ENCODE measurements at regions of chr1 and their contacts with region 1.

Region 1: GRCh38 chr1:11037740-11038182 is 9.3 kb downstream of the MASP2 start:
- DNase-seq: peak; percentile 90
- ATAC-seq: peak; percentile 98
- H3K4me3 ChIP-seq: no peak overlapping the region
- H3K4me3 Mint-ChIP-seq: no peak overlapping the region
- H3K27ac ChIP-seq: no peak overlapping the region
- H3K27ac Mint-ChIP-seq: no peak overlapping the region
- H3K4me1 ChIP-seq: peaks cover 0 to 3% of the 10 kb centered on the region in 2 donors
- H3K4me1 Mint-ChIP-seq: peaks cover 4% of the 10 kb centered on the region
- H3K27me3 ChIP-seq: peaks cover 0 to 13% (median 2%) of the 10 kb centered on the region in 4 experiments
- H3K27me3 Mint-ChIP-seq: peaks cover 7% of the 10 kb centered on the region
- CTCF ChIP-seq: peak; percentile 99

Region 2: GRCh38 chr1:11012250-11013171 is 25.2 kb before region 1 on chr1 and contains the start of gene TARDBP:
- CTCF ChIA-PET with region 1: interaction called, 12 read pairs
- POLR2A ChIA-PET with region 1: no interaction called
- intact Hi-C with region 1: no loop called
- DNase-seq: peak; percentile 98
- ATAC-seq: peak; percentile 88
- H3K4me3 ChIP-seq: peak within 1 kb of the TSS; percentile 81 to 97 (median 95)
- H3K4me3 Mint-ChIP-seq: peak within 1 kb of the TSS; percentile 86
- H3K27ac ChIP-seq: peak within 1 kb of the TSS; percentile 98 to 99
- H3K27ac Mint-ChIP-seq: peak within 1 kb of the TSS; percentile 99
- H3K4me1 ChIP-seq: peaks cover 15 to 26% of the 10 kb centered on the region in 2 donors
- H3K4me1 Mint-ChIP-seq: peaks cover 29% of the 10 kb centered on the region
- H3K27me3 ChIP-seq: no peaks in the 10 kb centered on the region
- H3K27me3 Mint-ChIP-seq: no peaks in the 10 kb centered on the region
- CTCF ChIP-seq: no peak
- total RNA-seq, gene TARDBP: 222 and 226 TPM in 2 replicates

Region 3: GRCh38 chr1:11072216-11072917 is 34.6 kb after region 1 on chr1:
- CTCF ChIA-PET with region 1: interaction called, 14 read pairs
- POLR2A ChIA-PET with region 1: no interaction called
- intact Hi-C with region 1: no loop called
- DNase-seq: no peak
- ATAC-seq: no peak
- H3K4me3 ChIP-seq: no peak overlapping the region
- H3K4me3 Mint-ChIP-seq: no peak overlapping the region
- H3K27ac ChIP-seq: no peak overlapping the region
- H3K27ac Mint-ChIP-seq: no peak overlapping the region
- H3K4me1 ChIP-seq: no peaks in the 10 kb centered on the region
- H3K4me1 Mint-ChIP-seq: peaks cover 4% of the 10 kb centered on the region
- H3K27me3 ChIP-seq: no peaks in the 10 kb centered on the region
- H3K27me3 Mint-ChIP-seq: no peaks in the 10 kb centered on the region
- CTCF ChIP-seq: no peak

Region 4: GRCh38 chr1:11248155-11248554 is 210.4 kb after region 1 on chr1:
- CTCF ChIA-PET with region 1: interaction called, 10 read pairs
- POLR2A ChIA-PET with region 1: no interaction called
- intact Hi-C with region 1: loop called (anchors 5 kb)
- DNase-seq: no peak
- ATAC-seq: no peak
- H3K4me3 ChIP-seq: no peak overlapping the region
- H3K4me3 Mint-ChIP-seq: no peak overlapping the region
- H3K27ac ChIP-seq: no peak overlapping the region
- H3K27ac Mint-ChIP-seq: no peak overlapping the region
- H3K4me1 ChIP-seq: no peaks in the 10 kb centered on the region
- H3K4me1 Mint-ChIP-seq: no peaks in the 10 kb centered on the region
- H3K27me3 ChIP-seq: no peaks in the 10 kb centered on the region
- H3K27me3 Mint-ChIP-seq: no peaks in the 10 kb centered on the region
- CTCF ChIP-seq: no peak

Region 5: DNA sequence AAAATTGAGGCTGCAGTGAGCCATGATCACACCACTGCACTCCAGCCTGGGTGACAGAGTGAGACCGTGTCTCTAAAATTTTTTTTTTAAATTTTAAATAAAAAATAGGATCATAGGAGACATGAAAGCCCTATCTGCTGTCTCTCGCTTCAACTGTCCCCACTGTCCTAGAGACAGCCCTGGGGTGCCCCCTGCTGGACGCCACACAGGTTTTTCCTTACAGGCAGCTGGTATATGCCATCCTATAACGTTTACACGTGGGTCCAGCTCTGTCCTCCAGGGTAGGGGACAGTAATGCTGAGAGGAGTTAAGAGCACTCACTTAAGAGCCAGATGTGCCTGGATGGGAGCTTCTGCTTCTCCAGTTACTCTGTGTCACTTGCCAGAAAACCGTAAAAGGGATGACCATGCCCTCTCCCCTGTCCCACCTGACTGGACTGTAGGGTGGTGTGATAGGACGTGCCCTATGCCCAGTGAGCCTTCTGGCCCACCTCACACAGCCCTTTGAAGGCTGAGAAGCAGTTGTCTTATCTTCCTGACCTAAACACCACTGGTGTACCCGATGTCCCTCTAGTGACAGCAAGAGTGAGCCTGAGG is 608.0 kb after region 1 on chr1:
- CTCF ChIA-PET with region 1: interaction called, 156 read pairs
- POLR2A ChIA-PET with region 1: no interaction called
- intact Hi-C with region 1: loop called (anchors 1 kb)
- DNase-seq: peak; percentile 79
- ATAC-seq: peak; percentile 48
- H3K4me3 ChIP-seq: no peak overlapping the region
- H3K4me3 Mint-ChIP-seq: no peak overlapping the region
- H3K27ac ChIP-seq: no peak overlapping the region
- H3K27ac Mint-ChIP-seq: no peak overlapping the region
- H3K4me1 ChIP-seq: peaks cover 12 to 16% of the 10 kb centered on the region in 2 donors
- H3K4me1 Mint-ChIP-seq: peaks cover 18% of the 10 kb centered on the region
- H3K27me3 ChIP-seq: peaks cover 0 to 3% (median 0%) of the 10 kb centered on the region in 4 experiments
- H3K27me3 Mint-ChIP-seq: no peaks in the 10 kb centered on the region
- CTCF ChIP-seq: peak; percentile 93

Region 6: GRCh38 chr1:11893907-11894251 is 856.1 kb after region 1 on chr1:
- CTCF ChIA-PET with region 1: interaction called, 10 read pairs
- POLR2A ChIA-PET with region 1: no interaction called
- intact Hi-C with region 1: loop called (anchors 1 kb)
- DNase-seq: peak; percentile 77
- ATAC-seq: peak; percentile 94
- H3K4me3 ChIP-seq: no peak overlapping the region
- H3K4me3 Mint-ChIP-seq: no peak overlapping the region
- H3K27ac ChIP-seq: no peak overlapping the region
- H3K27ac Mint-ChIP-seq: peak overlapping the region; percentile 78
- H3K4me1 ChIP-seq: no peaks in the 10 kb centered on the region
- H3K4me1 Mint-ChIP-seq: no peaks in the 10 kb centered on the region
- H3K27me3 ChIP-seq: peaks cover 0 to 14% (median 3%) of the 10 kb centered on the region in 4 experiments
- H3K27me3 Mint-ChIP-seq: peaks cover 12% of the 10 kb centered on the region
- CTCF ChIP-seq: peak; percentile 86